PC-3 (cell line): ENCODE measurements at regions of chrX and their contacts with region 1.

Region 1: GRCh38 chrX:18938710-18939109 is 45.2 kb downstream of the PHKA2 start:
- DNase-seq: peak; percentile 80
- ATAC-seq: peak; percentile 94
- H3K4me3 ChIP-seq: no peak overlapping the region
- H3K27ac ChIP-seq: peak overlapping the region; percentile 44
- H3K4me1 ChIP-seq: peaks cover 22% of the 10 kb centered on the region
- H3K27me3 ChIP-seq: no peaks in the 10 kb centered on the region
- CTCF ChIP-seq: no peak

Region 2: DNA sequence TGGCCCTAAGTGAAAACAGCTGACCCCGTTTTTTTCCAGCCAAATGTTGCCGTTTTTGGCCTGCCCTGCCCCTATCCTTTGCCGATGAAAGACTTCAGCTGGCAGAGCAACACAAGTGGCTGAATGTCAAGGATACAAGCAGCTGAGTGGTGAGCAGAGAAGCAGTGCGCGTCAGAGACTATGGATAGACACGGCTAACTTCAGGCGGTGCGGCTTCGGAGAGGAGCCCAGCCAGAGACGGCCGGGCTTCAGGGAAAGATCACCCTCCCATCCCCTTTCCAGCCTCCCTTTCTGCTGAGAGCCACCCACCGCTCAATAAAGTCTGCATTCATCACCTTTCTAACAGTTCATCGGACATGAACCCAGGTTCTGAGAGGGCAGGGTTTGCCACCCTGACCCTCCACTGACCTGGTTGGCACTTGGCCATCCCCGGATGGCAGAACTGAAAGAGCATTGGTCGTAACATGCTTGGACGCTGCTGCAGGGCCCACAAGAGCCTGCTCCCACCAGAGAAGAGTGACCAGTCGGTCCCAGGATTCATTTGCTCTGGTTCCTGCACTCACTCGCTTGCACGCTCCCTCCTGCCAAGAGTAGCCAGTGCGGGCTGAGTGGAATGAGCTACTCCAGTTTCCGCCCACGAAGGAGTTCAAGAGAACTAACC is 105.5 kb before region 1 on chrX:
- CTCF ChIA-PET with region 1: no interaction called
- POLR2A ChIA-PET with region 1: no interaction called
- intact Hi-C with region 1: no loop called
- DNase-seq: no peak
- ATAC-seq: no peak
- H3K4me3 ChIP-seq: no peak overlapping the region
- H3K27ac ChIP-seq: no peak overlapping the region
- H3K4me1 ChIP-seq: no peaks in the 10 kb centered on the region
- H3K27me3 ChIP-seq: no peaks in the 10 kb centered on the region
- CTCF ChIP-seq: no peak

Region 3: DNA sequence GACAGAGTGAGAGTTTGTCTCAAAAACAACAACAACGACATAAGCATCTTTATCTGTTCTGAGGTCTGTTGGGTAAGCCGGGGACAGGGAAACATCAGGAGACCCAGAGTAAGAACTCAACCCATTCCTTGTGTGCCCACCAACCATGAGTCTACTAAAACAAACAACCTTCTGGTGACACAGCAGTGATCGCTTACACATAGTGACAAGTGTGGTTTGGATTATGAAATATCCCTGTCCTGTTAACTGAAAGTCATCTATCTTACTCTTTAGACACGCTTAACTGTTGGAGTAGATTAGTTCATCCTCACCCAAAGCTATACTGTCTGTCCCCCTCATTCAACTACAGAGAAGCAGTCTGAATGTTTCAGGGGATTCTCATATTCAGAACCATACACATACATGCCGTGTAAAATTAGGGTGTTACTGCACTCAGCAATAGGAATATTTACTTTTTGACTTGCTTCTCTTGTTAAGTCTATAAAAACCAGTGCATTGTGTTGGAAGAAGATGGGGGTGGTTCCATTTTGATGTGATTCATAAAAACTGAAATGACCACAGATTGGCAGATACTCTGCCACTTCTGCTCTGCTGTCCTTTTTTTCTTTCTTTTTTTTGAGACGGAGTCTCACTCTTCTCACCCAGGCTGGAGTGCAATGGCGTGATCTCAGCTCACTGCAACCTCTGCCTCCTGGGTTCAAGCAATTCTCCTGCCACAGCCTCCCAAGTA is 17.8 kb after region 1 on chrX:
- CTCF ChIA-PET with region 1: no interaction called
- POLR2A ChIA-PET with region 1: no interaction called
- intact Hi-C with region 1: loop called (anchors 2 kb)
- DNase-seq: peak; percentile 69
- ATAC-seq: peak; percentile 71
- H3K4me3 ChIP-seq: peak overlapping the region; percentile 50; the same call in 1 of the 2 replicates
- H3K27ac ChIP-seq: peak overlapping the region; percentile 91
- H3K4me1 ChIP-seq: peaks cover 37% of the 10 kb centered on the region
- H3K27me3 ChIP-seq: no peaks in the 10 kb centered on the region
- CTCF ChIP-seq: no peak

Region 4: DNA sequence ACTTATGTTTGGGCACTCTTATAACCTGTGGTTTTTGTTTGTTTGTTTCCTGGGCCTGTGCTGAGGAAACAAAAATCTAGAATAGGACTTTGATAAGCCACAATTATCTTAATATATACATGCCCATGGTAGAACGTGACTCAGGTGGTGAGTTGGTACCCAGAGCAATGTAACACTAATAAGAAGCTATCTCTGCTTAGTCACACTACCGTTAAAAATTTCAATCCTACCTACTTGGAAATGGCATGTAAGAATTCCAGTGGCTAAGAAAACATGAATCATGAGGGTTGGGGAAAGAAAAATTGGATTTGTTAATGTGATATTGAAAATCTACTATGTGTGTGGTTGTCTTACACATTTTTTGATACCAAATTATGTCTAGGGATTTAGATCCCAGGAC is 214.1 kb after region 1 on chrX:
- CTCF ChIA-PET with region 1: no interaction called
- POLR2A ChIA-PET with region 1: no interaction called
- intact Hi-C with region 1: no loop called
- DNase-seq: peak; percentile 69
- ATAC-seq: peak; percentile 62
- H3K4me3 ChIP-seq: no peak overlapping the region
- H3K27ac ChIP-seq: no peak overlapping the region
- H3K4me1 ChIP-seq: peaks cover 8% of the 10 kb centered on the region; the same call in 1 of the 2 replicates
- H3K27me3 ChIP-seq: no peaks in the 10 kb centered on the region
- CTCF ChIP-seq: no peak